ENCODE measurements at regions of chr2 and their contacts with region 1.

Region 1: DNA sequence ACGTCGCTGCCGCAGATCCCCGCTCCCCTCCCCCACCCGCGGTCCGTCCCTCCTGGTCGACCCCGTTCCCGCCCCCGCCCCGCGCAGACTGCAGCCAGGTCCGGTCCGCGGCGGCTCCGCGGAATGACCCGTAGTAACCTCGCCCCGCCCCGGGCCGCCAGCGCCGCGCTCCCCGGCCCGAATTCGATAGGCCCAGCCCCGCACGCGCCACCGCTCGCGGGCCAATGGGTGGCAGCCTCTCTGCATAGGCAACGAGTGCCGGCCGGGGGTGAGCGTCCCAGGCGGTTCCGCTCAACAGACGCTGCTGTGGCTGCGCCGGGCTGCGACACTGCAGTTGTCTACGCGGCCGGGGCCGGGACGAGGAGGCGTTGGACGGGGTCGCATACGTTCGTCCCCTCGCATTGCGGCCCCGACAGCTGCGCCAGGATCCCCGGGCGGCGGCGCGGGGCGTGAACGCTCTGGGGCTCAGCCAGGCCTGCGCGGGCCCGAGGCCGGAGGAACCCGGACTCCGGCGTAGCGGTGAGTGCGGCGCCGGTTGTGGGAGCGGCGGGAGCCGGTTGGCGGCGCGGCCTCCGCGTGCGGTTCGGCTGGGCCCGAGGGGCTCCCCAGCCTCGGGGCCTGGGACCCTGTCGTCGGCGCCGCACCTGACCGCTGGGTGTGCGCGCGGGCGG is at the start of gene ACSL3:
- DNase-seq: peak; percentile 97 to 99 (median 98)
- ATAC-seq: peak; percentile 89 to 99 (median 96)
- H3K4me3 ChIP-seq: peak within 1 kb of the TSS; percentile 74 to 99 (median 93)
- H3K27ac ChIP-seq: peak within 1 kb of the TSS; percentile 93 to 100 (median 98)
- H3K4me1 ChIP-seq: peaks cover 7 to 54% (median 41%) of the 10 kb centered on the region in 12 donors
- H3K27me3 ChIP-seq: no peaks in the 10 kb centered on the region
- CTCF ChIP-seq: peak in 4 of 12 donors; percentile 20 to 45 (median 27)
- POLR2A ChIP-seq: peak; percentile 93 to 99
- total RNA-seq, gene ACSL3: 44.5 to 56.8 (median 52.4) TPM

Region 2: DNA sequence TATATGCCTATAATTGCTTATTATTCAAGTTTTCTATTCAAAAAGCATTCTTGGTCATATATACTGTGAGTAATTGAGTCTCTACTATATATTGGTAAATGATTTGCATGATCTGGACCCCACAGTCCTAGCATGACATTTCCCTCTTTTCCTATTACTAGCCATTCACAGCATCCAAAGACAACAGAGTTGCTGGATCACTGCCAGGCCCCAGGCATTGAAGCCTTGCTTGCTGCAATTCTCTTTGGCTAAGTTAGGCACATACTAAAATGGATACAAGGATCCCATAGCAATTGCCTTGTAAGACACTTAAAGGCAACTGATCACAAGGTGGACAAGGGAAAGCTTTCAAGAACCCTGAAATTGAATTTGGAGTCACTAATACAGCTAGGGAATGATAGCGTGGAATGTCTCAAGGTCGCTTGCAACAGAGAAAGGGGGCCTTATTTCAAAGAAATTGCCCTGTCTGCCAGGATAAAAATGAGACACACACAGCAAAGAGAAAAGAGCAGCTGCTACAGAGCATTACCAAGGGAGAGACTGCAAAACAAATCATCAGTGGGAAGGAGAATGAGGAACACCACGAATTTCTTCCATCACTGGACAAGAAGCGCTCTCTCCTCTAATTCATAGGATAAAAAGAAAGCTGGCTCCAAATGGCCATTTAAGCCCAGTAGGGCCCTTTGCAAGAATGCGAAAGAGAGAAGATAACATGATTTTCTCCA is 1211.7 kb before region 1 on chr2:
- intact Hi-C with region 1: no loop called
- DNase-seq: peak in 4 of 5 donors; percentile 22 to 35 (median 32)
- ATAC-seq: no peak
- H3K4me3 ChIP-seq: no peak overlapping the region
- H3K27ac ChIP-seq: no peak overlapping the region
- H3K4me1 ChIP-seq: no peaks in the 10 kb centered on the region
- H3K27me3 ChIP-seq: peaks cover 0 to 5% (median 0%) of the 10 kb centered on the region in 9 donors
- CTCF ChIP-seq: no peak
- POLR2A ChIP-seq: no peak

Region 3: GRCh38 chr2:222707689-222708525 is 153.0 kb before region 1 on chr2:
- intact Hi-C with region 1: loop called (anchors 1 to 5 kb)
- DNase-seq: peak; percentile 74 to 89 (median 81)
- ATAC-seq: peak in 3 of 4 donors; percentile 56 to 65 (median 61)
- H3K4me3 ChIP-seq: no peak overlapping the region
- H3K27ac ChIP-seq: no peak overlapping the region
- H3K4me1 ChIP-seq: peaks cover 0 to 23% (median 11%) of the 10 kb centered on the region in 12 donors
- H3K27me3 ChIP-seq: no peaks in the 10 kb centered on the region
- CTCF ChIP-seq: peak; percentile 96 to 98 (median 97)
- POLR2A ChIP-seq: no peak

Region 4: GRCh38 chr2:222792001-222792611 is 68.8 kb before region 1 on chr2:
- intact Hi-C with region 1: loop called in 8 of 10 experiments (anchors 2 to 10 kb)
- DNase-seq: peak; percentile 50 to 79 (median 70)
- ATAC-seq: peak; percentile 91 to 95 (median 92)
- H3K4me3 ChIP-seq: peak overlapping the region in 2 of 12 donors; percentile 2 to 11
- H3K27ac ChIP-seq: peak overlapping the region; percentile 50 to 91 (median 75)
- H3K4me1 ChIP-seq: peaks cover 0 to 57% (median 40%) of the 10 kb centered on the region in 12 donors
- H3K27me3 ChIP-seq: no peaks in the 10 kb centered on the region
- CTCF ChIP-seq: no peak
- POLR2A ChIP-seq: peak in 1 of 2 donors; percentile 27

Region 5: GRCh38 chr2:222813177-222813843 is 47.6 kb before region 1 on chr2:
- intact Hi-C with region 1: loop called in 1 of 10 experiments (anchors 5 kb)
- DNase-seq: no peak
- ATAC-seq: no peak
- H3K4me3 ChIP-seq: no peak overlapping the region
- H3K27ac ChIP-seq: no peak overlapping the region
- H3K4me1 ChIP-seq: peaks cover 0 to 8% (median 0%) of the 10 kb centered on the region in 12 donors
- H3K27me3 ChIP-seq: no peaks in the 10 kb centered on the region
- CTCF ChIP-seq: no peak
- POLR2A ChIP-seq: no peak

Region 6: GRCh38 chr2:222835143-222835822 is 25.6 kb before region 1 on chr2:
- intact Hi-C with region 1: no loop called
- DNase-seq: no peak
- ATAC-seq: no peak
- H3K4me3 ChIP-seq: no peak overlapping the region
- H3K27ac ChIP-seq: no peak overlapping the region
- H3K4me1 ChIP-seq: peaks cover 0 to 5% (median 0%) of the 10 kb centered on the region in 12 donors
- H3K27me3 ChIP-seq: no peaks in the 10 kb centered on the region
- CTCF ChIP-seq: no peak
- POLR2A ChIP-seq: no peak

Measured in heart left ventricle (tissue), 16 donors.